ENCODE measurements at regions of chr9 and their contacts with region 1.

Region 1: GRCh38 chr9:35116898-35117551 is 1.4 kb upstream of the ATOSB start:
- DNase-seq: peak; percentile 67 to 91 (median 87)
- ATAC-seq: peak; percentile 77
- H3K4me3 ChIP-seq: peak overlapping the region; percentile 82
- H3K4me3 Mint-ChIP-seq: peak overlapping the region; percentile 88 to 100 (median 93)
- H3K27ac ChIP-seq: peak overlapping the region; percentile 79
- H3K27ac Mint-ChIP-seq: peak overlapping the region; percentile 89 to 98 (median 94)
- H3K4me1 ChIP-seq: peaks cover 26 to 33% of the 10 kb centered on the region in 2 donors
- H3K4me1 Mint-ChIP-seq: peaks cover 27 to 43% (median 41%) of the 10 kb centered on the region in 7 donors
- H3K27me3 ChIP-seq: no peaks in the 10 kb centered on the region
- H3K27me3 Mint-ChIP-seq: peaks cover 0 to 6% (median 0%) of the 10 kb centered on the region in 5 donors

Region 2: DNA sequence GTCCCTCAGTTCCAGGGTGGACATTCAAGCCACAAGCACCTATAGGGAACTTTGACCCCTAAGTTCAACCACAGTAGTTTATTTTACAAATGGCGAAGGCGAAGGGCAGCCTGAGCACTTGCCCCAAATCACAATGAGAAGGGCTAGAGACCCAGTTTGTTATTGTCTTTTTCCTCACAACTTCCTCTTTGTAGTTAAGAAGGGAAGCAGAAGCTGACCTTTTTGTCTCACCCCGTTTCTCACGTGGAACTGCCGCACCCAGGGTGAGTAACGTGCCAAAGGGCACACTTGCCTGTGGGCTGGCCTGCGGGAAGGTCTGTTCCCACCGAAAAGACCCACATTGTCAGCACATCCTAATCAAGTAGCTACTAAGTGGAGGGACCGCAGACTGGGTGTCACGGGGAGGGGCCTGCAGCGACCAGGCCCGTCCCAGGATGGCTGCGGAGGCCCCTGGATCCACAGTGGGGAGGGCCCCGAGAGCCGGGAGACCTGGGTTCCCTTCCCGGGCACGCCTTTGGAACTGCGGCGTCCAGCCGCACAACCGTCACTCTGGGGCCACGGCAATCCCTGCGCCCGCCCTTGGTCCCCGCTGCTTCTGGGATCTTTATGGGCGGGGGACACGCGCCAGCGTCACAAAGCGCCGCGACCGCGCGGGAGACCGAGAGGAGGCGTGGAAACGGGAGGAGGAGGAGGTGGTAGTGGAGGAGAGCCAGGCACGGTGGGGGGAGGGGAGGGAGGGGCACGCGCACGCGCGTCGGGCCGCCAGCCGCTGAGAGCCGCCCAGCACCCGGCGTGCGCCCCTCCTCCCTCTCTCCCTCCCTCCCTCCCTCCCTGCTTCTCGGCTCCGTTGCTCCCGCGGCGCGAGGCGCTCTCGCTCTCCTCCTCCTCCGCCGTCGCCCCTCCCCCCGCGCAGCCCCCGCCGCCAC is 1300.4 kb before region 1 on chr9 and contains the start of gene UBE2R2:
- CTCF ChIA-PET with region 1: no interaction called
- POLR2A ChIA-PET with region 1: no interaction called
- intact Hi-C with region 1: loop called in 1 of 2 experiments (anchors 10 kb)
- DNase-seq: peak; percentile 81 to 94 (median 90)
- ATAC-seq: peak; percentile 86
- H3K4me3 ChIP-seq: peak within 1 kb of the TSS; percentile 88
- H3K4me3 Mint-ChIP-seq: peak within 1 kb of the TSS; percentile 83 to 98 (median 93)
- H3K27ac ChIP-seq: peak within 1 kb of the TSS; percentile 96
- H3K27ac Mint-ChIP-seq: peak within 1 kb of the TSS; percentile 91 to 99 (median 97)
- H3K4me1 ChIP-seq: peaks cover 19 to 21% of the 10 kb centered on the region in 2 donors
- H3K4me1 Mint-ChIP-seq: peaks cover 24 to 60% (median 54%) of the 10 kb centered on the region in 7 donors
- H3K27me3 ChIP-seq: no peaks in the 10 kb centered on the region
- H3K27me3 Mint-ChIP-seq: no peaks in the 10 kb centered on the region
- total RNA-seq, gene UBE2R2: 27.2 to 40.8 (median 32.0) TPM

Region 3: DNA sequence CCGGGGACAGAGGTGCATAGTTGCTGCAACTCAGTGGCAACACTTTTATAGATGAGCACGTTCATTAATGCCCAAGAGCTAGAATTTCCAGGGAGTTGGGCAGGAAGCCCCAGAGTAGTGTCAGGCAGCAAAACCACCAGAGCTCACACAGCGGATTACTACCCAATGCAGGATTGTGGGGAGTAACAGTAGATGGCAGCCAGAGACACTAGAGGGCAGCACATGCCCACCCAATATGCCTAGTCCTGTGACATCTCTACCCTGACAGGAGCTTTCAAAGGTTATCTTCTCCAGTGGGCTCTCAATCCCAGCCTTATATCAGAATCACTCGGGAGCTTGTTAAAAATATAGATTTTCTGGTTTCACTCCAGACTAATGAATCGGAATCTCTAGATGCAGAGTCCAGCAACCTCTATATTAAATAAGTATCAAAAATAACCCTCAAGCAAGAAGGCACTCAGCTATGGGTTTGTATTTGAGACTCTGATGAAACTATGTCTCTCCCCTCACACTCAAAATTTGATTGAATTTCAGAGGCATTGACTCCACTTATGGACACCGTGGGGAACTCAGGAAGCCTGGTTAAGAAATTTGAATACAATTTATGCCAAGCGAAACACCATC is 217.4 kb before region 1 on chr9:
- CTCF ChIA-PET with region 1: interaction called, 9 read pairs
- POLR2A ChIA-PET with region 1: no interaction called
- intact Hi-C with region 1: loop called (anchors 1 kb)
- DNase-seq: peak; percentile 59 to 84 (median 77)
- ATAC-seq: peak; percentile 100
- H3K4me3 ChIP-seq: no peak overlapping the region
- H3K4me3 Mint-ChIP-seq: no peak overlapping the region
- H3K27ac ChIP-seq: no peak overlapping the region
- H3K27ac Mint-ChIP-seq: no peak overlapping the region
- H3K4me1 ChIP-seq: no peaks in the 10 kb centered on the region
- H3K4me1 Mint-ChIP-seq: no peaks in the 10 kb centered on the region
- H3K27me3 ChIP-seq: no peaks in the 10 kb centered on the region
- H3K27me3 Mint-ChIP-seq: peaks cover 27 to 59% (median 36%) of the 10 kb centered on the region in 5 donors

Region 4: GRCh38 chr9:35102926-35103659 is 13.9 kb before region 1 on chr9 and contains the start of gene STOML2:
- CTCF ChIA-PET with region 1: interaction called, 14 read pairs
- POLR2A ChIA-PET with region 1: interaction called, 32 read pairs
- intact Hi-C with region 1: loop called in 1 of 2 experiments (anchors 1 kb)
- DNase-seq: peak; percentile 72 to 95 (median 91)
- ATAC-seq: peak; percentile 98
- H3K4me3 ChIP-seq: peak within 1 kb of the TSS; percentile 92
- H3K4me3 Mint-ChIP-seq: peak within 1 kb of the TSS; percentile 88 to 98 (median 92)
- H3K27ac ChIP-seq: peak within 1 kb of the TSS; percentile 81
- H3K27ac Mint-ChIP-seq: peak within 1 kb of the TSS; percentile 92 to 99 (median 96)
- H3K4me1 ChIP-seq: peaks cover 12 to 18% of the 10 kb centered on the region in 2 donors
- H3K4me1 Mint-ChIP-seq: peaks cover 18 to 36% (median 33%) of the 10 kb centered on the region in 7 donors
- H3K27me3 ChIP-seq: no peaks in the 10 kb centered on the region
- H3K27me3 Mint-ChIP-seq: no peaks in the 10 kb centered on the region
- total RNA-seq, gene STOML2: 34.7 to 126 (median 44.9) TPM

Region 5: DNA sequence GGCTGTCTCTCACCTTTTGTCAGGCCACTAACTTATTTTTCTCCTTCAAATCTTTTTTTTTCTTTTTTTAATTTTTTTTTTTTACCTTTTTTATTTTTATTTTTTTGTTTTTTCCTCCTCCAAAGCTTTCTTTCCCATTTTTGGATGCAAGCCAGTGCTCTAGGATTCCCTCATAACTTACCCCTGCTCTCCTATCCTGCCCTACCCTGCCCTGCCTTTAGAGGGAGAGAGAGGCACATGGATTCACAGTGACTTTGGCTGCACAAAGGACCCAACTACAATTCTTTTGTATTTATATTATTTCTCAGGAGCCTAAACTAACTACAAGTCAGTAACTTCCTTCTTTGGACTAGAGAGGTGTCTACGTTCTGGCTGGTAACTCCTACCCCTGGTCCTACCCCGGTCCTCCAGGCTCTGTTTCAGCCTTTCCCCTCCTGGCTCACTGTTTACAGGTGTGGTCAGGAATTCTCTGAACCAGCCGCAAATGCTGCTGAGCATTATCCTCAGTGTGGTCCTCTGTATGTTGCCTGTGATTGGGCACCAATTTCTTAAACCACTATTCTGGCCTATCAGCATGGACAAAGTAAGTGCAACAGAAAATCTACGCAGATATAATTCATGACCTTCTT is 364.4 kb after region 1 on chr9:
- CTCF ChIA-PET with region 1: interaction called, 7 read pairs
- POLR2A ChIA-PET with region 1: no interaction called
- intact Hi-C with region 1: loop called (anchors 1 kb)
- DNase-seq: peak in 3 of 9 donors; percentile 14 to 38 (median 19)
- ATAC-seq: peak; percentile 68
- H3K4me3 ChIP-seq: no peak overlapping the region
- H3K4me3 Mint-ChIP-seq: no peak overlapping the region
- H3K27ac ChIP-seq: no peak overlapping the region
- H3K27ac Mint-ChIP-seq: no peak overlapping the region
- H3K4me1 ChIP-seq: no peaks in the 10 kb centered on the region
- H3K4me1 Mint-ChIP-seq: no peaks in the 10 kb centered on the region
- H3K27me3 ChIP-seq: peaks cover 0 to 4% of the 10 kb centered on the region in 2 donors
- H3K27me3 Mint-ChIP-seq: peaks cover 0 to 15% (median 8%) of the 10 kb centered on the region in 5 donors

Region 6: GRCh38 chr9:35748858-35749514 is 632.0 kb after region 1 on chr9 and contains the starts of genes GBA2 and RGP1:
- CTCF ChIA-PET with region 1: no interaction called
- POLR2A ChIA-PET with region 1: no interaction called
- intact Hi-C with region 1: loop called in 1 of 2 experiments (anchors 5 kb)
- DNase-seq: peak; percentile 36 to 82 (median 51)
- ATAC-seq: peak; percentile 84
- H3K4me3 ChIP-seq: peak within 1 kb of the TSS; percentile 84
- H3K4me3 Mint-ChIP-seq: peak within 1 kb of the TSS; percentile 89 to 98 (median 96)
- H3K27ac ChIP-seq: peak within 1 kb of the TSS; percentile 87
- H3K27ac Mint-ChIP-seq: peak within 1 kb of the TSS; percentile 89 to 97 (median 96)
- H3K4me1 ChIP-seq: peaks cover 32 to 33% of the 10 kb centered on the region in 2 donors
- H3K4me1 Mint-ChIP-seq: peaks cover 36 to 66% (median 49%) of the 10 kb centered on the region in 7 donors
- H3K27me3 ChIP-seq: no peaks in the 10 kb centered on the region
- H3K27me3 Mint-ChIP-seq: no peaks in the 10 kb centered on the region
- total RNA-seq, gene GBA2: 22.7 to 55.4 (median 49.9) TPM
- total RNA-seq, gene RGP1: 21.2 to 28.8 (median 23.3) TPM

Region 7: DNA sequence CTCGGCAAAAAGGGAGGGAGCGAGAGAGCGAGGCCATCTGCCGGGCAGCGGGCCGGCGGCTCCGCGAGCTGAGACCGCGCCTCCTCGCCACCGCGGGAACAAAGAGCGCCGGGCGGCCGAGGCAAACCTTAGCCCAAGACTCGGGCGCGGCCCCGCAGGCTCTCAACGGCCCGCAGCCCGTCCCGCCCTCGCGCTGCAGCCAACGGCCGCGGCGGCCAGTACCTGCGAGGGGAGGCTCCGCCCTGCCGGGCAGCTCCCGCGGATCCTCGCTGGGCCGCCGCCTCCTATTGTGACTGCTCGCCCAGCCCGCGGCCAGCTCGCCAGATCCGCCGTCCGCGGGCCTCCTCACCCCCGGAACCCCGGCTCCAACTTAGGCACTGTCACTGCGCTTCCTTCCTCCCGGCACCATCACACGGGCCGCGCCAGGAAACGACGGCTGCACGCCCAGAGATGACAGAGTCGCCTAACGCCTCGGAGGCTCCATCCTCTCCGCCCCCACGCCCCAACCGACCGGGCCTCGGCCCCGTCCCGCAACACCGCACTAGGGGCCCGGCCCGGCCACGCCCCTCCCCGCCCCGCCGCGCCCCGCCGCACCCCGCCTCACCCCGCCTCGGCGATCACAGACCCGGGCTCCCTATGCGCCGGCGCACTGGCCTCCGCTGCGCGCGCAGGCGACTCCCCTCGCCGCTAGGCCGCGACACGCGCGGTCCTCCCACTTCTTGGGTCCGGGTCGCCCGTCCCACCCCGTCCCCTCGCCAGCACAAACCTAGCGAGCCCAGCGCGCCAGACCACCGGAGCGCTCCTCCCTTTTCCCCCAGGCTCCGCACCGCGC is 1283.5 kb after region 1 on chr9:
- CTCF ChIA-PET with region 1: no interaction called
- POLR2A ChIA-PET with region 1: no interaction called
- intact Hi-C with region 1: loop called (anchors 5 to 10 kb)
- DNase-seq: peak; percentile 83 to 94 (median 91)
- ATAC-seq: peak; percentile 88
- H3K4me3 ChIP-seq: peak overlapping the region; percentile 77
- H3K4me3 Mint-ChIP-seq: peak overlapping the region; percentile 85 to 97 (median 92)
- H3K27ac ChIP-seq: peak overlapping the region; percentile 94
- H3K27ac Mint-ChIP-seq: peak overlapping the region; percentile 92 to 98 (median 95)
- H3K4me1 ChIP-seq: peaks cover 16 to 26% of the 10 kb centered on the region in 2 donors
- H3K4me1 Mint-ChIP-seq: peaks cover 32 to 60% (median 54%) of the 10 kb centered on the region in 7 donors
- H3K27me3 ChIP-seq: no peaks in the 10 kb centered on the region
- H3K27me3 Mint-ChIP-seq: peaks cover 0 to 2% (median 0%) of the 10 kb centered on the region in 5 donors

Measured in naive thymus-derived CD4-positive, alpha-beta T cell (primary cell).